PC-9 (cell line): ENCODE measurements at regions of chr1 and their contacts with region 1.

Region 1: GRCh38 chr1:153598309-153599172 is 14.4 kb downstream of the S100A16 start:
- DNase-seq: no peak
- H3K4me3 ChIP-seq: no peak overlapping the region
- H3K27ac ChIP-seq: no peak overlapping the region
- H3K4me1 ChIP-seq: peaks cover 34% of the 10 kb centered on the region
- H3K27me3 ChIP-seq: no peaks in the 10 kb centered on the region
- CTCF ChIP-seq: no peak

Region 2: GRCh38 chr1:153447498-153448170 is 150.9 kb before region 1 on chr1:
- CTCF ChIA-PET with region 1: no interaction called
- POLR2A ChIA-PET with region 1: no interaction called
- intact Hi-C with region 1: no loop called
- DNase-seq: no peak
- H3K4me3 ChIP-seq: no peak overlapping the region
- H3K27ac ChIP-seq: no peak overlapping the region
- H3K4me1 ChIP-seq: 0 out of 2 replicates have a peak, but pooled peaks cover 5% of the 10 kb centered on the region
- H3K27me3 ChIP-seq: peaks cover 54% of the 10 kb centered on the region
- CTCF ChIP-seq: no peak

Region 3: DNA sequence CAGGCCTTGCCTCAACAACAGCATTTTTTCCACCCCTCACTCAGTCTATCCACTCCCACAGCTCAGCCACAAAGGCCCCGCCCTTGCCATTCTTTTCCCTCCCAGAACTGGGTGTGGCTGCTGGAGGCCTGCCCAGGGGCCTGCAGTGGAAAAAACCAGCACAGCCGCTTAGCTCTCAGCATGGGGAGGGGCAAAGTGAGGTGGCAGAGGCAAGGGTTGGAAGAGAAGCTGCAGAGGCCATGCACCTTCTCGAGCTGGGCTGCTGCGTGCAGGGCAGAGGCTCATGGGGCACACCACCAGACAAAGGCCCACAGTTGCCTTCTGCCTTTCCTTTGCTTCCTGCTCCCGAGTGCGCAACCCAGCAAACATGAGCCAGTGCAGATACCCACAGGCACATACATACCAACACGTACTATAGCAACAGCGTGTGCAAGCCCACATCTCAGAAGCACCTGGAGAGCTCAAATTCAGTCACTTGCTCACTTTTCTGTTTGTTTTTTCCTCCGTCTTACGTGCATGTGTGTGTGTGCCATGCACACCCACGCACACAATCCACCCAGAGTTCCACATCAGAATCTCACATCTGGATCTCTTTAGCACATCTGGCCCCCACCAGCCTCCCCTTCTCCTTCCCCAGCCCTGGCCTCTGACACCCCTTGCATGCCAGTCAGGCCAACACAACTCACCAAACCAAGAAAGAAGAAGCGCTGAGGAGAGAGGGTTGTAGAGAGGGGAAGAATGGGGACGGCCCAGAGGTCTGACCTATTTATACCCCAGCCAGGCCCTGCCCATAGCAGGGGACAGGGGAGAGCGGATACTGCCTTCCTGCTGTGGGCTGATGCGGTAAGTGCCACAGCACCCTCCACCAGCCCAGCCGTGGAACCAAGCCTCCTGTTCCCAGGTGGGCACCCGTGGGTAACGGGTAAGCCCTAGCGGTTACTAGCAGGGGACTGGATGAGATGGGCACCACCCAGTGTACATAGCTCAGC is 53.2 kb before region 1 on chr1 and contains the start of gene S100A4:
- CTCF ChIA-PET with region 1: no interaction called
- POLR2A ChIA-PET with region 1: interaction called, 12 read pairs
- intact Hi-C with region 1: no loop called
- DNase-seq: peak; percentile 91 to 98
- H3K4me3 ChIP-seq: peak within 1 kb of the TSS; percentile 61
- H3K27ac ChIP-seq: peak within 1 kb of the TSS; percentile 67
- H3K4me1 ChIP-seq: peaks cover 91% of the 10 kb centered on the region
- H3K27me3 ChIP-seq: no peaks in the 10 kb centered on the region
- CTCF ChIP-seq: no peak
- total RNA-seq, gene S100A4: 303 and 346 TPM in 2 replicates